Dorsolateral prefrontal cortex (tissue), 120 donors: ENCODE measurements at regions of chr21 and their contacts with region 1.

Region 1: DNA sequence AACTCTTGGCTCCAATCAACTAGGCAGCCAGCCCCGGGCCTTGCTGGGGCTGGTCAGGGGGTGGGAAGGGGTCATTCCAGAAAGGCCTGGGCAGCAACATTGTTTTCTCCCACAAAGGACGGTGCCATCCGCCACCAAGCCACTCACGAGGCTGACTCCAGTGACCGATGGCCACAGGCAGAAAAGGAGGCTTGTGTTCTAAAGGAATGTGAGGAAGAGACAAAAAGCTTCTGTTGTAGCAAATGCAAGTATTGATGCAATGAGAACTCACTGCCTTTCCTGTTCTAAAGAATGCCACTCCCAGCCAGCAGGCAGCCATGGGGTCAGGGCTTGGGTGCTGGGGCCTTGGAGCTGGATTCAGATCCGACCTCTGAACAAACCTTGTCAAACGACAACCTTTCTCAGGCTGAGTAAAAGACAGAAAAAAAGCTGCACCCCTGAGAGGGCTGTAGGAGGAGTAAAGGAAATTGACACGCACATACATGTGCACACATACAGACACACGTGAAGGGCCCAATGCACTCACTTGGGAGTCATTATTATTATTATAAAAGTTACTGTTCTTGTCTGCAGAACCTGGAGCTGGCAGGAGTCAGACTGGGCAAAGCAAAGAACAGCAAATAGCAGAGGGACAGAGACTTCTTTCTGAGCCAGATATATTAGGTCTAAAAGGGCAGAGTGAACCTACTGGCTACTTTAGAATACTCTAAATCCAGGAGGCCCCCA is 13.9 kb upstream of the PRMT2 start:
- DNase-seq: peak in 9 of 10 donors; percentile 61 to 90 (median 85)
- H3K4me3 ChIP-seq: peak overlapping the region in 11 of 59 donors; percentile 2 to 21 (median 13)
- H3K27ac ChIP-seq: peak overlapping the region; percentile 72 to 99 (median 97)
- H3K27me3 ChIP-seq: peaks cover 0 to 1% (median 0%) of the 10 kb centered on the region in 45 donors
- CTCF ChIP-seq: peak in 1 of 56 donors; percentile 27

Region 2: GRCh38 chr21:45670731-45671130 is 950.9 kb before region 1 on chr21:
- intact Hi-C with region 1: no loop called
- DNase-seq: peak in 2 of 10 donors; percentile 34 to 52
- H3K4me3 ChIP-seq: no peak overlapping the region
- H3K27ac ChIP-seq: no peak overlapping the region
- H3K27me3 ChIP-seq: no peaks in the 10 kb centered on the region
- CTCF ChIP-seq: no peak

Region 3: GRCh38 chr21:46605767-46606426 is 15.7 kb before region 1 on chr21:
- intact Hi-C with region 1: loop called (anchors 1 kb)
- DNase-seq: peak in 2 of 10 donors; percentile 25 to 51
- H3K4me3 ChIP-seq: peak overlapping the region in 7 of 59 donors; percentile 58 to 83 (median 70)
- H3K27ac ChIP-seq: peak overlapping the region; percentile 76 to 98 (median 94)
- H3K27me3 ChIP-seq: no peaks in the 10 kb centered on the region
- CTCF ChIP-seq: no peak

Region 4: GRCh38 chr21:46635324-46636172 is 13.9 kb after region 1 on chr21 and contains the start of gene PRMT2:
- intact Hi-C with region 1: loop called in 1 of 2 experiments (anchors 1 kb)
- DNase-seq: peak; percentile 90 to 98 (median 95)
- H3K4me3 ChIP-seq: peak within 1 kb of the TSS; percentile 69 to 100 (median 96)
- H3K27ac ChIP-seq: peak within 1 kb of the TSS; percentile 93 to 100 (median 99)
- H3K27me3 ChIP-seq: no peaks in the 10 kb centered on the region
- CTCF ChIP-seq: peak in 35 of 56 donors; percentile 1 to 52 (median 32)
- total RNA-seq, gene PRMT2: 91.1 to 161 (median 119) TPM

Region 5: GRCh38 chr21:46650476-46651098 is 29.0 kb after region 1 on chr21:
- intact Hi-C with region 1: no loop called
- DNase-seq: no peak
- H3K4me3 ChIP-seq: no peak overlapping the region
- H3K27ac ChIP-seq: peak overlapping the region in 24 of 59 donors; percentile 1 to 71 (median 29)
- H3K27me3 ChIP-seq: no peaks in the 10 kb centered on the region
- CTCF ChIP-seq: no peak

Region 6: DNA sequence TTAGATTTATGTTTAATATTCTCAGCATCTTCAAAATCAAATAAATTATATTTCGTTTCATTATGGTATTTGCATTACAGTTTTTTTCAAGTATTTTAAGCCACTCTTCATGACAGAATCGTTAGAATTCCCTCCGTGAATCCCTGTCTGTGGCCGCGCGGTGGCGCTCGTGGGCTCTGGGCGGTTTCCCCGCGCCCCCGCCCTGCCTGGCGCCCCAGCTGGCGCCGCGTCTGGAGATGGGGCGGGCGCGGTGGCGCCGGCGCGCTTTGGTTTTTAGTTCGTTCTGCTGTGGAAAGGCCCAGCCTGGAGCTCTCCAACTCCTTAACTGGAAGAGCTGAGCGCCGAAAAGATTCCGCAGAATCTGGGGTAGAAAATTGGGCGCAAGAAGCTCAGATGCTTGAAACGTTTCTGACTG is 39.6 kb after region 1 on chr21:
- intact Hi-C with region 1: no loop called
- DNase-seq: peak; percentile 53 to 84 (median 70)
- H3K4me3 ChIP-seq: peak overlapping the region in 57 of 59 donors; percentile 7 to 64 (median 47)
- H3K27ac ChIP-seq: peak overlapping the region in 51 of 59 donors; percentile 8 to 87 (median 76)
- H3K27me3 ChIP-seq: no peaks in the 10 kb centered on the region
- CTCF ChIP-seq: peak; percentile 60 to 96 (median 86)